ENCODE measurements at regions of chr10 and their contacts with region 1.

Region 1: DNA sequence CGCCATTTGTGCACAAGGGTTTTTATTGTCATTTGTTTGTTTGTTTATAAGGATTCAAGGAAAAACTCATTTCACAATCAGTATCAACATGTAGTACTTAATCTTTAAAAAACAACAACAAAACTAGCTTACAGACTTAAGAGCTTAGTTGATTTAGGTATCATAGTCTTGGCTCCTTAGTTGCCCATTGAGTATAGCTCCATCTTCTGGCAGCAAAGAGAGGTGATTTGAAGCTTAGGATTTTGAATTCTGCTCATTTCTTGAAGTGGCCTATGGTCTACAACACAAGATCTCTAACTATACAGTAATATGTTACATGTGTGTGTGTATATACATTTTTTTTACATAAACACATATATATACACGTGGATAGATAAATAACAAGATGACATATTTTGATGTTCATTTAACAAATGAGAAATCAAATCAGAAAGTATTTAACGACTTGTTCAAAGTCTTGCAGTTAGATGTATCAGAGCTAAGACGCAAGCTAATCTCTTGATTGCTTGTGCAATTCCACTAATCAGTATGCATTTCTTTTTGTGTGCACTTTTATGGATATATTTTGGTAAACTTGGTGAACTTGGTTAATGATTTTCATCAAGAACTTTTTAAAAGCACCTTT is 307.3 kb downstream of the CAMK1D start:
- DNase-seq: peak; percentile 11
- H3K4me3 ChIP-seq: no peak overlapping the region
- H3K27ac ChIP-seq: no peak overlapping the region
- H3K27me3 ChIP-seq: no peaks in the 10 kb centered on the region
- CTCF ChIP-seq: peak; percentile 76

Region 2: DNA sequence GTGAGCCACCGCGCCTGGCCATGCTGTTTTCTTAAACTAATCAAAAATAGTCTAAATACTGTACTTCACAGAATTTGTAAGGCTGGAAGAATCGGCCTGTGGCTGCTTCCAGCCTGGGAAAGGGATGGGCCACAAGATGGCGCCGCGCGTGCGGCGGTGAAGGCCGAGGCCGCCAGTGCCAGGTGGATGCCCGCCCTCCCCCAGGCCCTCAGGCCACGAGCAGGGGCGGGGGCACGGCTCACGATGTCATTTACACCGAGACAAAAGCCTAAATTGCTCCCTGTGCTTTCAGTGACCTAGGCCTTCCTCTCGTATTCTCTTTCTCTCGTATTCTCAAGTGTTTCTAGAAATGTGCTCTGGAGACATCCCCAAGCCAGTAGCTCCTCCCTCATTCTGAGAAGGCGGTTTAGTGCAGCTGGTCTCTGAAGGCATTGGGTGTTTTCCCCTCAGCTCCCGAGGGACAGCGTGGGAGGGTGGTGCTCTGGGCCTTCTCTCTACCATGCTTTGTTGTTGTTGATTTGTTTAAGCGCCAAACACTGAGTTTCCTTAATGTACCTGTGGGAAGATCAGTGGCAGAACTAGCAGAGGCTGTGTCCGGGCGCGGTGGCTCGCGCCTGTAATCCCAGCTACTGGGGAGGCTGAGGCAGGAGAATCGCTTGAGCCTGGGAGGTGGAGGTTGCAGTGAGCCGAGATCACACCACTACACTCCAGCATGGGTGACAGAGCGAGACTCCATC is 392.3 kb before region 1 on chr10:
- CTCF ChIA-PET with region 1: interaction called, 45 read pairs
- POLR2A ChIA-PET with region 1: no interaction called
- DNase-seq: peak; percentile 34
- H3K4me3 ChIP-seq: peak overlapping the region; percentile 54
- H3K27ac ChIP-seq: peak overlapping the region; percentile 31
- H3K27me3 ChIP-seq: no peaks in the 10 kb centered on the region
- CTCF ChIP-seq: peak; percentile 84

Region 3: GRCh38 chr10:12645449-12645848 is 11.2 kb before region 1 on chr10:
- CTCF ChIA-PET with region 1: interaction called, 13 read pairs
- POLR2A ChIA-PET with region 1: no interaction called
- DNase-seq: no peak
- H3K4me3 ChIP-seq: no peak overlapping the region
- H3K27ac ChIP-seq: no peak overlapping the region
- H3K27me3 ChIP-seq: peaks cover 5% of the 10 kb centered on the region
- CTCF ChIP-seq: no peak

Region 4: GRCh38 chr10:12667052-12667451 is 10.4 kb after region 1 on chr10:
- CTCF ChIA-PET with region 1: interaction called, 12 read pairs
- POLR2A ChIA-PET with region 1: no interaction called
- DNase-seq: no peak
- H3K4me3 ChIP-seq: no peak overlapping the region
- H3K27ac ChIP-seq: no peak overlapping the region
- H3K27me3 ChIP-seq: no peaks in the 10 kb centered on the region
- CTCF ChIP-seq: no peak

Region 5: GRCh38 chr10:12800302-12800701 is 143.7 kb after region 1 on chr10:
- CTCF ChIA-PET with region 1: no interaction called
- POLR2A ChIA-PET with region 1: no interaction called
- DNase-seq: no peak
- H3K4me3 ChIP-seq: no peak overlapping the region
- H3K27ac ChIP-seq: no peak overlapping the region
- H3K27me3 ChIP-seq: no peaks in the 10 kb centered on the region
- CTCF ChIP-seq: 0 out of 2 replicates have a peak, but pooled peaks have one; percentile 12

Measured in AG04450 (cell line).